ENCODE measurements at regions of chr6 and their contacts with region 1.

Region 1: GRCh38 chr6:100464903-100465700 is at the start of gene SIM1:
- DNase-seq: peak; percentile 29 to 44
- ATAC-seq: peak; percentile 58 to 78
- H3K4me3 ChIP-seq: peak within 1 kb of the TSS; percentile 27 to 52 (median 49)
- H3K27ac ChIP-seq: peak within 1 kb of the TSS in 1 of 4 donors; percentile 55
- H3K4me1 ChIP-seq: peaks cover 6 to 10% of the 10 kb centered on the region in 2 donors
- H3K27me3 ChIP-seq: peaks cover 90 to 94% (median 90%) of the 10 kb centered on the region in 3 donors
- CTCF ChIP-seq: no peak
- POLR2A ChIP-seq: peak; percentile 24 to 34
- total RNA-seq, gene SIM1: 0.19 to 1.8 (median 0.88) TPM

Region 2: DNA sequence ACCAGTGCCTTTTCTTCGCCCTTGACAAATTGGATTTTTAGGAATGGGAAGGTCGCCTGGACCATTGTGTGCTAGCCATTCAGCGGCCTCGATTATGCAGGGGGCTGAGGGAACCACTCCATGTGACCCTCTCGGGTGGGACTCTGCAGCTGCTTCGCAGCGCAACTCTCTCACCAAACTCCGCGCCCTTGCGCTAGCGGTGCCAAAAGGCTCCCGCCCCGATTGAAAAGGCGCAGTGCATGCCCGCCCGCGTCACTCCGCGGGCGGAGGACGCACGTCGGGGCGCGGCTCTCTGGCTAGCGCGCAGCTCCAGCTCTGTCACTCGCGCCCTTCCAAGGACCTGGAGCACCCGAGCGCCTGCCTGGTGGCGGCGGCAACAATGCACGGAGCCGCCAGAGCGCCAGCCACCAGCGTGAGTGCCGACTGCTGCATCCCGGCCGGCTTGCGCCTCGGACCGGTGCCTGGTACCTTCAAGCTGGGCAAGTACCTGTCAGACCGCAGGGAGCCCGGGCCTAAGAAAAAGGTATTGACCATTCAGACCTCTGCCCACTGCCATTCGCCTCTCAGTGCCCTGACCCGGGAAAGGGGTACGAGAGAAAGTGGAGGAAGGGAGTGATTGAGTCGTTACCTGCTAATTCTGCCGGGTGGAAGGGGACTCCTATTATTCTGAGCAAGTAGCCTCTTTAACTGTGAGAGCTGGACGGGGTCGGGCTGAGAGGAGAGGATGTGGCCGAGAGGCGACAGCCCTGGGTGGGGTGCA is 858.3 kb before region 1 on chr6 and contains the start of gene PRDM13:
- in situ Hi-C with region 1: no loop called
- intact Hi-C with region 1: loop called (anchors 5 kb)
- DNase-seq: no peak
- ATAC-seq: no peak
- H3K4me3 ChIP-seq: peak within 1 kb of the TSS in 1 of 4 donors; percentile 16
- H3K27ac ChIP-seq: no peak within 1 kb of the TSS
- H3K4me1 ChIP-seq: peaks cover 15 to 30% of the 10 kb centered on the region in 2 donors
- H3K27me3 ChIP-seq: peaks cover 100% of the 10 kb centered on the region in 3 donors
- CTCF ChIP-seq: no peak
- POLR2A ChIP-seq: no peak
- total RNA-seq, gene PRDM13: not detected

Region 3: DNA sequence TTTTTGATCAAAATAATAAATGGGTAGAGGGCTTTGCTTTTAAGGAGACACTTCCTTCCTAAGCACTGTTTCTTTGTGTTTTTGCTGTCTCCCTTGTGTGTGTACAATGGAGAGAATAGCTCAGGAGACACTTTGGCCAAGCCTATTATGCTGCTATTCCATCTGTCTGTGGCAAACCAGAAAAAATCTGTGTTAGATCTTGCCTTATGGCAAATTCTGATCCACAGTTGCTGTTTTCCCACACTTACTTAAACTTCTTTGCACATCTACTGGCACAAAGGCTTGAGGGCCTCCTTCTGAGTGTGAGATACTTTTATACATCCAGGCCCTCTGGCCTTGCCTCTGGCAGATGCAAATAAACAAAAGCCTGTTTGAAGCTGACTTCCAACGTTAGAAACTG is 804.9 kb before region 1 on chr6:
- in situ Hi-C with region 1: no loop called
- intact Hi-C with region 1: no loop called
- DNase-seq: no peak
- ATAC-seq: no peak
- H3K4me3 ChIP-seq: no peak overlapping the region
- H3K27ac ChIP-seq: no peak overlapping the region
- H3K4me1 ChIP-seq: no peaks in the 10 kb centered on the region
- H3K27me3 ChIP-seq: no peaks in the 10 kb centered on the region
- CTCF ChIP-seq: no peak
- POLR2A ChIP-seq: no peak